RWPE1 (cell line): ENCODE measurements at regions of chr5 and their contacts with region 1.

Region 1: GRCh38 chr5:140647042-140647341 is 438 bp downstream of the NDUFA2 start:
- DNase-seq: peak; percentile 36
- H3K27ac ChIP-seq: peak overlapping the region; percentile 79
- CTCF ChIP-seq: no peak

Region 2: DNA sequence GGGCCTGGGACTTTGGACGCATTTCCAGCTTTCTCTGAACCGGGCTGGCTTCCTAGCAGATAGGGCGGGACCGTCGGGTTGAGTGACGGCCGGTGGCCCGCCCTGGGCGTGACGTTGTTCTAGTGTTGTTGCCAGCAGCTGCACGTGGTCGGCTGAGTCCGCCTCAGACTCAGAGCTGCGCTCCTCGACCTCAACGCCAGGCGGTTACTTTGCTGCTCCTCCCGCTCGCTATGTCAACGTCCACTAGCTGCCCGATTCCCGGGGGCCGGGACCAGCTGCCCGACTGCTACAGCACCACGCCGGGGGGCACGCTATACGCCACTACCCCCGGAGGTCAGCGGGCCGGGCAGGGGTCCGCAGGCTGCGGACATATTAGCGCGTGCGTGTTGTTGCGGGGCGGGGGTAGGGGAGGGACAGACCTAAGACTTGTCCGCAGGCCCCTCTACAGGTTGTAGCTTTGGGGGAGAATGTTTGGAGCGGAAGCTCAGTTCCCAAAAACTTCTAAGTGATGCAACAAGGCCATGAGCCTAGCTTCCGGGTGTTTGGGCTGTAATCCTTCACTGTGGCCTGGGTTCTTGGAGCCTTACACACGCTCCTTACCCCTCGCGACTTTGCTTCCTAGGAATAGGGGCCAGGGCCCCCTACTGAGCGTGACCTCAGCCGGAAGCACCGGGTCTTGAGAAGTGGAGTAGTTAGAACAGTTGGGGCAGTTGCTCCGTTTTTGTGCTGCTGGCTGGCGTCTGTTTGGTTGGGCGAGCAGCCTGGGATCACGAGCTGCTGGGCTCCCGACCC is 99.3 kb before region 1 on chr5 and contains the start of gene EIF4EBP3:
- CTCF ChIA-PET with region 1: interaction called, 5 read pairs
- POLR2A ChIA-PET with region 1: interaction called, 18 read pairs
- DNase-seq: peak; percentile 97
- H3K27ac ChIP-seq: peak within 1 kb of the TSS; percentile 86
- CTCF ChIP-seq: peak; percentile 63

Region 3: DNA sequence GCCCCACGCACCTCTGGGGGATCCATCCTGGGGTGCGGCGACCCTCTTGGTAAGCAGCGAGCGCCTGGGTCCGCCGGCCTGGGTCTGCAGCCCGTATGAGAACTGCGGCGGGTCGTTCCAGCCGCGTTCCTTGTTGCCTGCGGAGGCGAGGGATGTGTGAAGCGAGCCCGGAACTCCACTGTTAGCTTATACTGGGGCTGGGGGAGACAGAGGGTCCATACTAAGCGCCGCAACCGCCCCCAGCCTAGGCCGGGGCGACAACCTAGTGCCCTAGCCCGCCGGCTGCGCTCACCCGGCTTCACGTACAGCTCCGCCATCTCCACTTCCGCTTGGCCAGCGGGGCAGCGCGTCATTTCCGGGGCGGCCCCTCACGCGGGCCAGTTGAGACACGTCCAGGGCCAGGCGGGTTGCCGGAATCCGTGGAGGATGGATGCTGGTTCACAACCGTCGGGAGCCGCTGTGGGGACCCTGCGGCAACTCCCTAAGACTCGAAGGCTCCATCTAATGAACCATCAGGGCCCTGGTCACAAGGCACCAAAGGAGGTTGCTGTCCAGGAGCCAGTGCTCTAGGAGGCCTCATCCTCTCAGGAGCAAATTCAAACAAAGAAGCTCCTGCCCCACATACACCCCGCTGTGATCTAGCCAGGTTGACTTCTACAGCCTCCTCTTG is 89.7 kb before region 1 on chr5 and contains the start of gene SRA1:
- CTCF ChIA-PET with region 1: interaction called, 10 read pairs
- POLR2A ChIA-PET with region 1: interaction called, 10 read pairs
- DNase-seq: peak; percentile 97
- H3K27ac ChIP-seq: peak within 1 kb of the TSS; percentile 72
- CTCF ChIP-seq: no peak

Region 4: DNA sequence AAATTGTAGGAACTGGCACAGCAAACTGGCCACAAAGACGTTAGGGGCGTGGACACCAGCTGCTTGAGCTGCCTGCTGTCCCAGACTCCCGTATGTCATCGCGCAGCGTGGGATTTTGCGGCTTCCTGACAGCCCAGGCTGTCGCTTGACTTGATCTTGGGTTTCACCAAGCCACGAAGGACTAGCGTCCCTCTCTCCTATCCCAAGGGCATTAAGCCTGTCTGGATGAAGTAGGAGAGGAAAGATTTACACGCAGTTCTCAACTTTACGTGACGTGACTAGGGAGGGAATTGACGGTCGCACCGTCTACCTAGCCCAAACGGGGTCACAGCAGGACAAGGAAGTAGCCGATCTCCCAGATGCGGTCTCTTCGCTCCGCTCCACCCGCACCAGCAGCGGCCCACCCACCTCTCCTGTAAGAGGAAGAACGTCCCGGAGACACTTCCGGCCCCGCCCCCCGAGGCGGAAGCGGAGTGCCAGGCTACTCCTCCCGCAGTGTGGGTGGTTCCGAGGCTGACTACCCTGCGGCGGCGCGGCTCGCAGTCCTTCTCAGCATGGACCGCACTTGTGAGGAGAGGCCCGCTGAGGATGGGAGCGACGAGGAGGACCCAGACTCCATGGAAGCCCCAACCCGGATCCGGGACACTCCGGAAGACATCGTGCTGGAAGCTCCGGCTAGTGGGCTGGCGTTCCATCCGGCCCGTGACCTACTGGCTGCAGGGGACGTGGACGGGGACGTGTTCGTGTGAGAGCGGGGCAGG is 17.5 kb after region 1 on chr5 and contains the start of gene WDR55:
- CTCF ChIA-PET with region 1: interaction called, 4 read pairs
- POLR2A ChIA-PET with region 1: interaction called, 14 read pairs
- DNase-seq: peak; percentile 99
- H3K27ac ChIP-seq: peak within 1 kb of the TSS; percentile 94
- CTCF ChIP-seq: no peak

Region 5: DNA sequence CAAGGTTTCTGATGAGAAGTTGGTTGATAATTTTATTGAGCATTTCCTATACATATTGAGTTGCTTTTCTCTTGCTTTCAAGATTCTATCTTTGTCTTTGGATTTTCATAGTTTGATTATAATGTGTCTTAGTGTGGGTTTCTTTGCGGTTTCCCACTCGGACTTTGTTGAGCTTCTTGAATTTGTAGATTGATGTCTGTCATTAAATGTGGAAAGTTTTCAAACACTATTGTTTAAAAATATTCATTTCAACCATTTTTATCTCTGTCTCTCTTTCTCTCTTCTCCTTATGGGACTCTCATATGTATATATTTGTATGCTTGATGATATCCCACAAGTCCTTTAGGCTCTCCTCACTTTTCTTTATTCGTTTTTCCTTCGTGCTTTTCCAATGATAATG is 120.5 kb after region 1 on chr5:
- CTCF ChIA-PET with region 1: no interaction called
- POLR2A ChIA-PET with region 1: no interaction called
- DNase-seq: no peak
- H3K27ac ChIP-seq: no peak overlapping the region
- CTCF ChIP-seq: no peak